ENCODE measurements at regions of chr6 and their contacts with region 1.

Region 1: GRCh38 chr6:87714093-87714809 is 12.2 kb upstream of the AKIRIN2 start:
- DNase-seq: peak; percentile 88
- ATAC-seq: peak; percentile 79
- H3K4me3 ChIP-seq: no peak overlapping the region
- H3K27ac ChIP-seq: no peak overlapping the region
- H3K4me1 ChIP-seq: peaks cover 5% of the 10 kb centered on the region
- H3K27me3 ChIP-seq: no peaks in the 10 kb centered on the region
- CTCF ChIP-seq: no peak
- POLR2A ChIP-seq: no peak
- RAD21 ChIP-seq: no peak

Region 2: DNA sequence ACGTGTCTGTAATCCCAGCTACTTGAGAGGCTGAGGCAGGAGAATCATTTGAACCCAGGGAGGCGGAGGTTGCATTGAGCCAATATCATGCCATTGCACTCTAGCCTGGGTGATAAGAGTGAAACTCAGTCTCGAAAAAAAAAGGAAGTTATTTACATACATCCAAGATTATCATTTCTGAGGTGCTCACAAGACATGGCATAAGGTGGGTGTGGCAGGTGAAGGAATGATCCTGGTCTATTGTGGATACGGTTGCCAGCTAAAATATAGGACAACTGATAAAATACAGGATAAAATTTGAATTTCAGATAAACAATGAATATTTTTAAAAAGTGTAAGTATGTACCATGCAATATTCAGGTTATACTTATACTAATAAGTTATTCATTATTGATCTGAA is 142.2 kb after region 1 on chr6:
- CTCF ChIA-PET with region 1: no interaction called
- POLR2A ChIA-PET with region 1: no interaction called
- dilution Hi-C with region 1: no loop called
- in situ Hi-C with region 1: no loop called
- intact Hi-C with region 1: no loop called
- DNase-seq: no peak
- ATAC-seq: no peak
- H3K4me3 ChIP-seq: no peak overlapping the region
- H3K27ac ChIP-seq: no peak overlapping the region
- H3K4me1 ChIP-seq: no peaks in the 10 kb centered on the region
- H3K27me3 ChIP-seq: peaks cover 4% of the 10 kb centered on the region
- CTCF ChIP-seq: no peak
- POLR2A ChIP-seq: no peak
- RAD21 ChIP-seq: no peak

Region 3: DNA sequence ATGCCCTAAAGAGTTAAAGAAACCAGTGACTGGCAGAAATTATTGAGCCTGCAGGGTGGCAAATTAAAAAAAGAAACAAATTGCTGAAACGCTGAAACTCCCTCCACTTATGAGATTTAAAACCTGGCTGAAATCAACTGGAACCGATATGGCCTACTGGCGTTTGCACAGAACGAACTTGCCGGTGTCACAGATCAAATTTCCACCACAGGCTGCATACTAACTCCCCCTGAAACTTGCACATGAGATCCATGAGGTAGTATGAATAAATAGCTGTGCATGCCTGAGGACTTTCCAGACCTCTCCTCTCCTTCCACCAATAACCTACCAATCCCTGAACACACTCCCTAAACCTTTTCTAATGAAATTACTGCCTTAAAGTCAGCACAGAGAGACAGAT is 1098.8 kb after region 1 on chr6:
- CTCF ChIA-PET with region 1: interaction called, 10 read pairs
- POLR2A ChIA-PET with region 1: no interaction called
- dilution Hi-C with region 1: no loop called
- in situ Hi-C with region 1: no loop called
- intact Hi-C with region 1: no loop called
- DNase-seq: no peak
- ATAC-seq: no peak
- H3K4me3 ChIP-seq: no peak overlapping the region
- H3K27ac ChIP-seq: no peak overlapping the region
- H3K4me1 ChIP-seq: 0 out of 2 replicates have a peak, but pooled peaks cover 2% of the 10 kb centered on the region
- H3K27me3 ChIP-seq: no peaks in the 10 kb centered on the region
- CTCF ChIP-seq: no peak
- POLR2A ChIP-seq: no peak
- RAD21 ChIP-seq: no peak

Measured in IMR-90 (cell line).